Thyroid gland (tissue), 4 donors: ENCODE measurements at regions of chr14 and their contacts with region 1.

Region 1: GRCh38 chr14:24058260-24058950 is 6.6 kb downstream of the CARMIL3 start:
- DNase-seq: peak; percentile 73 to 84
- H3K4me3 ChIP-seq: no peak overlapping the region
- H3K27ac ChIP-seq: no peak overlapping the region
- H3K4me1 ChIP-seq: no peaks in the 10 kb centered on the region
- H3K27me3 ChIP-seq: no peaks in the 10 kb centered on the region
- CTCF ChIP-seq: peak; percentile 44 to 96 (median 78)
- POLR2A ChIP-seq: no peak

Region 2: DNA sequence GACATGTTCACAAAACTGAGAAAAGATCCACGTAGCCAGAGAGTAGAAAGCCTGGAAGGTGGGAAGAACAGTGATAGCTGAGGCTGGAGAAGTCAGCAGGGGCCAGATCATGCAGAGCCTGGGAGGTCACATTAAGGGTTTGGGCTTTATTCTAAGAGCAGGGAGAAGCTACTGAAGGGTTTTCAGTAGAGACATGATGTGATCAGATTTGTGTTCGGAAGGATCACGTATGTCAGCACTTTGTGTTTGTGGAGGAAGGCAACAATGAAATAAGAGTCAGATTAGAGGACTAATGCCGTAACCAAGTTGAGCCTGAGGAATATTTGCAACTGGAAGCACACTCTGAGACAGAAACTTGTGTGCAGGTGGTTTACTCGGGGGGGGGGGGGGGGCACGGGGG is 31.5 kb after region 1 on chr14:
- intact Hi-C with region 1: loop called (anchors 2 kb)
- DNase-seq: no peak
- H3K4me3 ChIP-seq: no peak overlapping the region
- H3K27ac ChIP-seq: no peak overlapping the region
- H3K4me1 ChIP-seq: peaks cover under 1 to 19% of the 10 kb centered on the region in 2 donors
- H3K27me3 ChIP-seq: no peaks in the 10 kb centered on the region
- CTCF ChIP-seq: no peak
- POLR2A ChIP-seq: no peak

Region 3: DNA sequence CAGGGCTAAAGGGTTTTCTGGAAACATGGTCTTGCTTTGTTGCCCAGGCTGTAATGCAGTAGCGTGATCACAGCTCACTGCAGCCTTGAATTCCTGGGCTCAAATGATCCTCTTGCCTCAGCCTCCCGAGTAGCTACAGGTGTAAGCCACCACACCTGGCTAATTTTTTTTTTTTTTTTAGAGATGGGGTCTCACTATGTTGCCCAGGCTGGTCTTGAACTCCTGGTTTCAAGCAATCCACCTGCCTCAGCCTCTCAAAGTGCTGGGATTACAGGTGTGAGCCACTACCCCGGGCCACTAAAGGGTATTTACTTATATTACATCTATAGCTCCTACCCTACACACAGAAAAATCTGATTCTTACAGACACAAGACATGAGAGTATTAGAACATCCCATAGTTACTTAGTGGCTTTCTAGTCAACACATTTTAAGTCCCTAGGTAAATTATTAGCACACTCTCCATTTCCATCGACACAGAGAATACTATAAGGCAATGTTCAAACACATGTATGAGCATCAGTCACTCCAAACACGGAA is 50.0 kb after region 1 on chr14:
- intact Hi-C with region 1: loop called (anchors 5 kb)
- DNase-seq: no peak
- H3K4me3 ChIP-seq: no peak overlapping the region
- H3K27ac ChIP-seq: peak overlapping the region; percentile 29 to 62 (median 50)
- H3K4me1 ChIP-seq: peaks cover 15 to 28% of the 10 kb centered on the region in 2 donors
- H3K27me3 ChIP-seq: no peaks in the 10 kb centered on the region
- CTCF ChIP-seq: no peak
- POLR2A ChIP-seq: no peak